Activated T-helper 2 cell treated with anti-CD3 and anti-CD28 coated beads, Interferon-gamma antibody, Interleukin-2, Interleukin-4, amounts not matched to agents 10 μg/mL and 5 μg/mL and 100 μg/mL, durations not matched to agents 14 hours and 24 hours and 36 hours (primary cell): ENCODE measurements at regions of chr12 and their contacts with region 1.

Region 1: DNA sequence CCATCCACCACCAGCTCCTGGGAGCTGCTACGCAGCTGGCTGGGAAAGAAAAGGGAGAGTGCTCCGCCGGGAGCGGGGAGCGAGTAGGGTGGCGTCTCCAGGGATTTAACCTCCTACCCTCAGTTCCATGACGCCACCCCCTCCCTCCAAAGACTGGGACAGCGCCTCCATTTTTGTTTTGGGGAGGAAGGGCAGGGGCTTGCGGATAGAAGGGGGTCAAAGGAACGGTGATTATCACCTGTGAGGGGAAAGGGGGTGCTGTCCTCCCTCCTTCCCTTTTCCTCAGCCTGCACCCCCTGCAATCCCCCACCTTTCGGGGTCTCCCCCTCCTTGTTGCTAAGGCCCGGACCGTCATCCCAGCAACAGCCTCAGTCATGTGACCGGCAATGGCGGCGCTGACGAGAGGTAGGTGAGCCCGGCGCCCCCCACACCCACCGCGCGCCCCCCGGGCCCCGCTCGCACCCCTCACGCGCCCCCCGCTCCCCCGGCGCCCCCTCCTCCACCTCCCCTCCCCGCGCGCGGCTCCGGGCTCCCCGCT is at the start of gene DTX3:
- DNase-seq: no peak
- H3K4me3 Mint-ChIP-seq: peak within 1 kb of the TSS; percentile 75
- H3K27ac Mint-ChIP-seq: peak within 1 kb of the TSS; percentile 86
- H3K4me1 Mint-ChIP-seq: peaks cover 11% of the 10 kb centered on the region
- H3K27me3 Mint-ChIP-seq: no peaks in the 10 kb centered on the region
- total RNA-seq, gene DTX3: 17.7 and 21.7 TPM in 2 replicates

Region 2: DNA sequence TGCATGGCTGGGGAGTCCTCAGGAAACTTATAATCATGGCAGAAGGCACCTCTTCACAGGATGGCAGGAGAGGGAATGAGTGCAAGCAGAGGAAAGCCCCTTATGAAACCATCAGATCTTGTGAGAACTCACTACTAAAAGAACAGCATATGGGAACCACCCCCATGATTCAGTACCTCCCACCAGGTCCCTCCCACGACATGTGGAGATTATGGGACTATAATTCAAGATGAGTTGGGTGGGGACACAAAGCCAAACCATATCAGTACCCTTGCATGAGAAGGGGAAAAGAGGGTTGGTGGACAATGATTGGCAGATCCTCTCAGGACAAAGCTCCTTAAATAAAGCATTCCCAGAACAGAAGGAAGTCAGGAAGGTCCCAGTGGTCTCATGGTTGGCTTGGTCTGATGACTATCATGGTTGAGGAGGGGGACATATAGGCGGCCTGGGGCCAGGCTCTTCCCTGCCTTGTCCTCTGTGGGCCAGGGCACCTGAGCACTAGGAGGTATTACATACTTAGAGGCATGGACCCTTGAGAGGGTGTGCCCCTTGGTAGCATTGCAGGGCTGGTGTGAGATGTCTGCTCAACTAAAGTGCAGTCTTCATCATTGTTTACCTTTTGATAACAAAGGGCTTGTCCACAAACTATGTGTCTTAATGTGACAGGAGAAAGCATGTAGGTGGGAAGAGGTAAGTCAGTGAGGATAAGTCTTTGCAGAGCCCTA is 819.2 kb before region 1 on chr12:
- intact Hi-C with region 1: no loop called
- DNase-seq: no peak
- H3K4me3 Mint-ChIP-seq: no peak overlapping the region
- H3K27ac Mint-ChIP-seq: no peak overlapping the region
- H3K4me1 Mint-ChIP-seq: no peaks in the 10 kb centered on the region
- H3K27me3 Mint-ChIP-seq: no peaks in the 10 kb centered on the region

Region 3: DNA sequence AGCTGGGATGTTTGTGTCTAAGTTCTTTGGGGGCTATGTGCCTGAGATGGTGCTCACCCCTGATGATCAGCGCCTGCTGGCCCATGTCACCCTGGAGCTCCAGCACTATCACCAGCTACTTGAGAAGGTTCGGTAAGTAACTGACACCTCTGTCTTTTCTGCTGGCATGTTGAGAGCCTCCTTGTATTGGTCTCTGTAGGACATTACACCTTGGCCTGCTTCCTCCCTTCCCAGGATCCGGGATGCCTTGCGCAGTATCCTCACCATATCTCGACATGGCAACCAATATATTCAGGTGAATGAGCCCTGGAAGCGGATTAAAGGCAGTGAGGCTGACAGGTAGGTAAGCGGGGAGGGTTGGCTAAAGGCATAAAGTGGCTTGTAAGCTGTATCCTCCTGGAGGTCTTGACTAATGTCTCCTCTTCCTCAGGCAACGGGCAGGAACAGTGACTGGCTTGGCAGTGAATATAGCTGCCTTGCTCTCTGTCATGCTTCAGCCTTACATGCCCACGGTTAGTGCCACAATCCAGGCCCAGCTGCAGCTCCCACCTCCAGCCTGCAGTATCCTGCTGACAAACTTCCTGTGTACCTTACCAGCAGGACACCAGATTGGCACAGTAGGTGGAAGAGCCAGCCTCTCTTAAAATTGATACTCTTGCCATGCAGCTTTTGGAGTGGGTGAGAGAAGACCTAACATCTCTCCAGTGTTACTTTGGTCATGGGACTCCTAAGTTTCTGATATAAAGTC is 89.6 kb before region 1 on chr12:
- intact Hi-C with region 1: no loop called
- DNase-seq: no peak
- H3K4me3 Mint-ChIP-seq: no peak overlapping the region
- H3K27ac Mint-ChIP-seq: no peak overlapping the region
- H3K4me1 Mint-ChIP-seq: peaks cover 23% of the 10 kb centered on the region
- H3K27me3 Mint-ChIP-seq: no peaks in the 10 kb centered on the region

Region 4: DNA sequence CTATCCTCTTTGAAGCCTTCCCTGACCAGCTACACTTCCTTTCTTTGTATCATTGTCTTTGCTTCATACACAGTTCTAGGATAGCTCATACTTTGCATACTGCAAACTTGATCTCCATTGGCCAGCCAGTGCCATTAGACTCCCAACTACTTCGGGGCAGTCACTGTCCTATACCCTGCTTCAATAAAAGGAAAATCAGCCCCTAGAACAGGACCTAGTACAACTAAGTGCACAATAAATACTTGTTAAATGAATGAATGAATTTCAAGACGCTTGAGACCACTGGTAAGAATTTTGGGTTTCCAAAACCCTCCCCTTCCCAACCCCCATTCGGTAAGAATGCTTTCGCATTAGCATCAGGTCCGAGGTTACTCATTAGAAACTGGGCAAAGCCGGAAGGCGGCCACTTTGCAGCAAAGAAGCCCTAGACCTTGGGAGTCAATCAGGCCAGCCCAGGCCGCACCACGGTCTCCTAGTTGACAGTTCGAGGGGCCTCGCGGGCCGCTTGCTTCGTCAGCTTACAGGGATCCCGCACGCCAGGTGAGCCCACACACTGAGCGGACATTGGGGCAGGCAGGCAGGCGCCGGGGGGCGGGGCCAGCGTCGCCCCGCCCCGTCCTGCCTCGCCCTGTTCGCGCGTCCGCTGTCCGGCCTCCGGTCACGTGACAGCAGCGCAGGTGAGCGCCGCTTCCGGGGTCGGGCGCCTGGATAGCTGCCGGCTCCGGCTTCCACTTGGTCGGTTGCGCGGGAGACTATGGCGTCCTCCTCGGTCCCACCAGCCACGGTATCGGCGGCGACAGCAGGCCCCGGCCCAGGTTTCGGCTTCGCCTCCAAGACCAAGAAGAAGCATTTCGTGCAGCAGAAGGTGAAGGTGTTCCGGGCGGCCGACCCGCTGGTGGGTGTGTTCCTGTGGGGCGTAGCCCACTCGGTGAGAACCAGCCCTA is 13.7 kb before region 1 on chr12 and contains the start of gene PIP4K2C:
- intact Hi-C with region 1: loop called (anchors 1 kb)
- DNase-seq: peak; percentile 73
- H3K4me3 Mint-ChIP-seq: peak within 1 kb of the TSS; percentile 86
- H3K27ac Mint-ChIP-seq: peak within 1 kb of the TSS; percentile 69
- H3K4me1 Mint-ChIP-seq: peaks cover 16% of the 10 kb centered on the region
- H3K27me3 Mint-ChIP-seq: no peaks in the 10 kb centered on the region
- total RNA-seq, gene PIP4K2C: 23.2 and 24.6 TPM in 2 replicates